HepG2 (cell line): ENCODE measurements at regions of chr20 and their contacts with region 1.

Region 1: GRCh38 chr20:37901654-37902503 is 1.0 kb upstream of the VSTM2L start:
- DNase-seq: peak; percentile 61
- ATAC-seq: peak; percentile 49
- H3K4me3 ChIP-seq: peak overlapping the region in 1 of 3 experiments; percentile 64; a peak in 1 of 6 replicates
- H3K27ac ChIP-seq: no peak overlapping the region
- H3K4me1 ChIP-seq: peaks cover 16% of the 10 kb centered on the region; the same call in 1 of the 2 replicates
- H3K27me3 ChIP-seq: peaks cover 13 to 54% of the 10 kb centered on the region in 2 experiments; a peak in 4 of 5 replicates
- CTCF ChIP-seq: peak; percentile 85
- EP300 ChIP-seq: no peak
- POLR2A ChIP-seq: no peak
- RAD21 ChIP-seq: peak; percentile 57; the same call in 1 of the 2 replicates

Region 2: GRCh38 chr20:37564388-37565133 is 337.3 kb before region 1 on chr20:
- CTCF ChIA-PET with region 1: interaction called, 4 read pairs
- POLR2A ChIA-PET with region 1: no interaction called
- in situ Hi-C with region 1: loop called (anchors 5 kb)
- intact Hi-C with region 1: loop called (anchors 10 kb)
- DNase-seq: peak; percentile 30
- ATAC-seq: peak; percentile 87
- H3K4me3 ChIP-seq: peak overlapping the region in 2 of 3 experiments; percentile 12 to 50; a peak in 2 of 6 replicates
- H3K27ac ChIP-seq: no peak overlapping the region
- H3K4me1 ChIP-seq: peaks cover 33% of the 10 kb centered on the region
- H3K27me3 ChIP-seq: peaks cover 6 to 65% of the 10 kb centered on the region in 2 experiments; a peak in 4 of 5 replicates
- CTCF ChIP-seq: peak; percentile 99
- EP300 ChIP-seq: no peak
- POLR2A ChIP-seq: no peak
- RAD21 ChIP-seq: peak; percentile 99

Region 3: GRCh38 chr20:37651932-37652331 is 249.9 kb before region 1 on chr20:
- CTCF ChIA-PET with region 1: interaction called, 11 read pairs
- POLR2A ChIA-PET with region 1: no interaction called
- in situ Hi-C with region 1: loop called (anchors 10 kb)
- intact Hi-C with region 1: loop called (anchors 1 kb)
- DNase-seq: peak; percentile 51
- ATAC-seq: peak; percentile 95
- H3K4me3 ChIP-seq: no peak overlapping the region
- H3K27ac ChIP-seq: no peak overlapping the region
- H3K4me1 ChIP-seq: no peaks in the 10 kb centered on the region
- H3K27me3 ChIP-seq: peaks cover 0 to 12% of the 10 kb centered on the region in 2 experiments; a peak in 2 of 5 replicates
- CTCF ChIP-seq: peak; percentile 96
- EP300 ChIP-seq: no peak
- POLR2A ChIP-seq: no peak
- RAD21 ChIP-seq: peak; percentile 97

Region 4: GRCh38 chr20:37810027-37810426 is 91.9 kb before region 1 on chr20:
- CTCF ChIA-PET with region 1: no interaction called
- POLR2A ChIA-PET with region 1: no interaction called
- in situ Hi-C with region 1: no loop called
- intact Hi-C with region 1: loop called (anchors 1 kb)
- DNase-seq: no peak
- ATAC-seq: no peak
- H3K4me3 ChIP-seq: no peak overlapping the region
- H3K27ac ChIP-seq: no peak overlapping the region
- H3K4me1 ChIP-seq: no peaks in the 10 kb centered on the region
- H3K27me3 ChIP-seq: no peaks in the 10 kb centered on the region
- CTCF ChIP-seq: no peak
- EP300 ChIP-seq: no peak
- POLR2A ChIP-seq: no peak
- RAD21 ChIP-seq: no peak

Region 5: DNA sequence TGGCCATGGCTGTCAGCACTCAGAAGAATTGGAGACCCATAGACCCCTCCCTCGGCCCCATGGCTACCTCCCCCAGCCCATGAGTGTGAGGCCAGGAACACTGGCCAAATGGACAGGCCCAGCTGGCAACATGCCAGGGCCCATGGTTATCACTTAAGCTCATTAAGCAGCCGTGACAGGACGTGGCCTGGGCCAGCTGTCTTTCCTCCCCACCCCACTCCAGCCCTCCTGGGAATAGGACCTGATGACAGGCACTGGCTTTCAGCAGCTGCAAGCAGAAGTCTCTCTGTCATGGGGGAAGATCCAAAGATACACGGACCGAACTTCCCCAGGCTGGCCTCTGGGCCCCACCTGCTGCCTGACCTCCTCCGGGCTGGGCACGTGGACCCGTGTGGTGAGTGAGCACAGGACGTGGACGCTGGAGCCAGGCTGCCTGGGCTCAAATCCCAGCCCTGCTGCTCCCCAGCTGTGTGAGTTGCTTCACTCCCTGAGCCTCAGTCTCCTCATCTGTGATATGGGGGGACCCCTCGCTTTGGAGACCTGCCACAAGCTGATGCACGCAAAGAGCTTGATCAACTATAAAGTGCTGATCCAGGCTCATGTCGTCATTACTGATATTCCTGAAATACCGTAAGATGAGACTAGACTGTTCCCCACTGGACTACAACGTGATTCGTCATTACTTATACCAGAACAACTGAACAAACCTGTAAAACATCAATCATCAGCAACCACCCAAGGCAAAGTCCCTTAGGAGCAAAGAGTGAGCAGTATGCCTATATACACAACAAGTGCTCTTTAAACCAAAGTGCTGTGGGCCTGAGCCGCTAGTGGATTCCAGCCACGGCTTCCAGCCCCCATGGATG is 20.9 kb before region 1 on chr20:
- CTCF ChIA-PET with region 1: no interaction called
- POLR2A ChIA-PET with region 1: no interaction called
- in situ Hi-C with region 1: no loop called
- intact Hi-C with region 1: no loop called
- DNase-seq: peak; percentile 70
- ATAC-seq: peak; percentile 62
- H3K4me3 ChIP-seq: peak overlapping the region in 2 of 3 experiments; percentile 23 to 59; a peak in 4 of 6 replicates
- H3K27ac ChIP-seq: no peak overlapping the region
- H3K4me1 ChIP-seq: peaks cover 74% of the 10 kb centered on the region
- H3K27me3 ChIP-seq: peaks cover 10 to 25% of the 10 kb centered on the region in 2 experiments; a peak in 4 of 5 replicates
- CTCF ChIP-seq: 0 out of 2 replicates have a peak, but pooled peaks have one; percentile 3
- EP300 ChIP-seq: peak; percentile 12 to 25; a peak in 1 of 4 replicates
- POLR2A ChIP-seq: 0 out of 4 replicates have a peak, but pooled peaks of 1 of the 2 experiments have one; percentile 31
- RAD21 ChIP-seq: no peak

Region 6: GRCh38 chr20:38023181-38024001 is 121.5 kb after region 1 on chr20:
- CTCF ChIA-PET with region 1: no interaction called
- POLR2A ChIA-PET with region 1: no interaction called
- in situ Hi-C with region 1: no loop called
- intact Hi-C with region 1: no loop called
- DNase-seq: peak; percentile 43
- ATAC-seq: peak; percentile 82
- H3K4me3 ChIP-seq: no peak overlapping the region
- H3K27ac ChIP-seq: peak overlapping the region; percentile 15
- H3K4me1 ChIP-seq: peaks cover 48% of the 10 kb centered on the region
- H3K27me3 ChIP-seq: no peaks in the 10 kb centered on the region
- CTCF ChIP-seq: no peak
- EP300 ChIP-seq: no peak
- POLR2A ChIP-seq: no peak
- RAD21 ChIP-seq: no peak